Activated naive CD8-positive, alpha-beta T cell treated with anti-CD3 and anti-CD28 coated beads, Interleukin-2, amount 10 ng/mL, durations not matched to agents 7 days and 5 days (primary cell): ENCODE measurements at regions of chr16 and their contacts with region 1.

Region 1: GRCh38 chr16:31128711-31129567 is 6.6 kb downstream of the PRSS8 start:
- DNase-seq: no peak
- ATAC-seq: peak; percentile 25
- H3K4me3 Mint-ChIP-seq: no peak overlapping the region
- H3K27ac Mint-ChIP-seq: peak overlapping the region; percentile 70
- H3K4me1 Mint-ChIP-seq: peaks cover 5% of the 10 kb centered on the region
- H3K27me3 Mint-ChIP-seq: no peaks in the 10 kb centered on the region

Region 2: GRCh38 chr16:31117391-31118197 is 11.3 kb before region 1 on chr16 and contains the start of gene KAT8:
- POLR2A ChIA-PET with region 1: interaction called, 12 read pairs
- DNase-seq: peak; percentile 95
- ATAC-seq: peak; percentile 94
- H3K4me3 Mint-ChIP-seq: peak within 1 kb of the TSS; percentile 87
- H3K27ac Mint-ChIP-seq: peak within 1 kb of the TSS; percentile 87
- H3K4me1 Mint-ChIP-seq: peaks cover 12% of the 10 kb centered on the region
- H3K27me3 Mint-ChIP-seq: no peaks in the 10 kb centered on the region
- total RNA-seq, gene KAT8: 66.5 to 72.9 TPM